AG04450 (cell line): ENCODE measurements at regions of chr21 and their contacts with region 1.

Region 1: GRCh38 chr21:32096411-32096810 is 182.4 kb downstream of the MIS18A start:
- DNase-seq: no peak
- H3K4me3 ChIP-seq: no peak overlapping the region
- H3K27ac ChIP-seq: no peak overlapping the region
- H3K27me3 ChIP-seq: no peaks in the 10 kb centered on the region
- CTCF ChIP-seq: peak; percentile 36

Region 2: GRCh38 chr21:31543191-31543590 is 553.2 kb before region 1 on chr21:
- CTCF ChIA-PET with region 1: interaction called, 18 read pairs
- POLR2A ChIA-PET with region 1: no interaction called
- DNase-seq: peak; percentile 37
- H3K4me3 ChIP-seq: no peak overlapping the region
- H3K27ac ChIP-seq: no peak overlapping the region
- H3K27me3 ChIP-seq: no peaks in the 10 kb centered on the region
- CTCF ChIP-seq: no peak

Region 3: GRCh38 chr21:31957631-31958030 is 138.8 kb before region 1 on chr21:
- CTCF ChIA-PET with region 1: no interaction called
- POLR2A ChIA-PET with region 1: no interaction called
- DNase-seq: no peak
- H3K4me3 ChIP-seq: no peak overlapping the region
- H3K27ac ChIP-seq: no peak overlapping the region
- H3K27me3 ChIP-seq: no peaks in the 10 kb centered on the region
- CTCF ChIP-seq: no peak

Region 4: GRCh38 chr21:32112195-32112594 is 15.8 kb after region 1 on chr21:
- CTCF ChIA-PET with region 1: no interaction called
- POLR2A ChIA-PET with region 1: no interaction called
- DNase-seq: no peak
- H3K4me3 ChIP-seq: no peak overlapping the region
- H3K27ac ChIP-seq: no peak overlapping the region
- H3K27me3 ChIP-seq: no peaks in the 10 kb centered on the region
- CTCF ChIP-seq: no peak

Region 5: GRCh38 chr21:32135401-32136363 is 39.3 kb after region 1 on chr21:
- CTCF ChIA-PET with region 1: no interaction called
- POLR2A ChIA-PET with region 1: no interaction called
- DNase-seq: no peak
- H3K4me3 ChIP-seq: no peak overlapping the region
- H3K27ac ChIP-seq: no peak overlapping the region
- H3K27me3 ChIP-seq: peaks cover 4% of the 10 kb centered on the region
- CTCF ChIP-seq: no peak